PC-9 (cell line): ENCODE measurements at regions of chr7 and their contacts with region 1.

Region 1: DNA sequence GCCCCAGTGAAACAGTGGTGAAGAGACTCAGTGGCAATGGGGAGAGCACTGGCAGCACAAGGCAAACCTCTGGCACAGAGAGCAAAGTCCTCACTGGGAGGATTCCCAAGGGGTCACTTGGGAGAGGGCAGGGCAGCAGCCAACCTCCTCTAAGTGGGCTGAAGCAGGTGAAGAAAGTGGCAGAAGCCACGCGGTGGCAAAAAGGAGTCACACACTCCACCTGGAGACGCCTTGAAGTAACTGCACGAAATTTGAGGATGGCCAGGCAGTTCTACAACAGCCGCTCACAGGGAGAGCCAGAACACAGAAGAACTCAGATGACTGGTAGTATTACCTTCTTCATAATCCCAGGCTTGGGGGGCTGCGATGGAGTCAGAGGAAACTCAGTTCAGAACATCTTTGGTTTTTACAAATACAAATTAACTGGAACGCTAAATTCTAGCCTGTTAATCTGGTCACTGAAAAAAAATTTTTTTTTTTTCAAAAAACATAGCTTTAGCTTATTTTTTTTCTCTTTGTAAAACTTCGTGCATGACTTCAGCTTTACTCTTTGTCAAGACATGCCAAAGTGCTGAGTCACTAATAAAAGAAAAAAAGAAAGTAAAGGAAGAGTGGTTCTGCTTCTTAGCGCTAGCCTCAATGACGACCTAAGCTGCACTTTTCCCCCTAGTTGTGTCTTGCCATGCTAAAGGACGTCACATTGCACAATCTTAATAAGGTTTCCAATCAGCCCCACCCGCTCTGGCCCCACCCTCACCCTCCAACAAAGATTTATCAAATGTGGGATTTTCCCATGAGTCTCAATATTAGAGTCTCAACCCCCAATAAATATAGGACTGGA is 435 bp upstream of the IL6 start:
- DNase-seq: peak; percentile 81 to 86
- H3K4me3 ChIP-seq: peak overlapping the region; percentile 45; the same call in 1 of the 2 replicates
- H3K27ac ChIP-seq: peak overlapping the region; percentile 73
- H3K4me1 ChIP-seq: peaks cover 48% of the 10 kb centered on the region
- H3K27me3 ChIP-seq: no peaks in the 10 kb centered on the region
- CTCF ChIP-seq: peak; percentile 85

Region 2: DNA sequence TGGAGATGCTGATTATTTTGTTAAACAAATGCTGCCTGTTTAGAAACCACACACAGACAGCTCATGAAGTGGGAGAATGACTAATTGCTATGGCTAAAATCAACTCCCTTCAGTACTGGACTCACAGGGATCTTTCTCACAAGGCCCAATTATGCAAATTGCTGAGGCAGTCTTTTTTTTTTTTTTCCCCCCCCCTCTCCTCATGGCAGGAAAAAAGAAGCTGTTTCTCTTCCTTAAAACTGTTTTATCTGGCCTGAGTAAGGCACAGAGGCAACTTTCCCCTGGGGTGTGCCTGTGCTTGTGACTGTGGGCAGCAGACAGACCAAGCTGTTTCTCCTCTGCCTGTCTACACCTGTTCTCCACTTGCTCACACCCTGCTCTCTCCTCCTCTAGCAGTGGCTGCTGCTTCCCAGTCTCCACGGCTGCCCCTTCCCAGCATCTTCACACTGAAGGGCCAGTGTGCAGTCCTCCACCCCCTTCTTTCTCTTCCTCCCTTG is 161.2 kb before region 1 on chr7:
- CTCF ChIA-PET with region 1: interaction called, 113 read pairs
- POLR2A ChIA-PET with region 1: interaction called, 24 read pairs
- intact Hi-C with region 1: loop called (anchors 1 kb)
- DNase-seq: peak in 1 of 2 experiments; percentile 89
- H3K4me3 ChIP-seq: peak overlapping the region; percentile 54; the same call in 1 of the 2 replicates
- H3K27ac ChIP-seq: peak overlapping the region; percentile 84
- H3K4me1 ChIP-seq: peaks cover 70% of the 10 kb centered on the region
- H3K27me3 ChIP-seq: no peaks in the 10 kb centered on the region
- CTCF ChIP-seq: no peak

Region 3: DNA sequence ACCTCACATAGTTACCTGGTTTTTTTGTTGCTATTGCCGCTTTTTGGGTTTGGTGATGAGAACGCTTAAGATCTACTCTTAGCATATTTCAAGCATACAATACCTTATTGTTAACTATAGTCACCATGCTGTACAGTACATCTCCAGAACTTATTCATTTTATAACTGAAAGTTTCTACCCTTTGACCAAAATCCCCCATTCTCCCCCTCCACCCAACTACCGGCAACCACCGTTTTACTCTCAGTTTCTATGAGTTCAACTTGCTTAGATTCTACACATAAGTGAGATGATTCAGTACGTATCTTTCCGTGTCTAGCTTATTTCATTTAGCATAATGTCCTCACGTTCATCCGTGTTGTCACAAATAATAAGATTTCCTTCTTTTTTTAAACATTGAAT is 86.3 kb before region 1 on chr7:
- CTCF ChIA-PET with region 1: no interaction called
- POLR2A ChIA-PET with region 1: interaction called, 13 read pairs
- intact Hi-C with region 1: no loop called
- DNase-seq: no peak
- H3K4me3 ChIP-seq: no peak overlapping the region
- H3K27ac ChIP-seq: no peak overlapping the region
- H3K4me1 ChIP-seq: no peaks in the 10 kb centered on the region
- H3K27me3 ChIP-seq: no peaks in the 10 kb centered on the region
- CTCF ChIP-seq: no peak

Region 4: DNA sequence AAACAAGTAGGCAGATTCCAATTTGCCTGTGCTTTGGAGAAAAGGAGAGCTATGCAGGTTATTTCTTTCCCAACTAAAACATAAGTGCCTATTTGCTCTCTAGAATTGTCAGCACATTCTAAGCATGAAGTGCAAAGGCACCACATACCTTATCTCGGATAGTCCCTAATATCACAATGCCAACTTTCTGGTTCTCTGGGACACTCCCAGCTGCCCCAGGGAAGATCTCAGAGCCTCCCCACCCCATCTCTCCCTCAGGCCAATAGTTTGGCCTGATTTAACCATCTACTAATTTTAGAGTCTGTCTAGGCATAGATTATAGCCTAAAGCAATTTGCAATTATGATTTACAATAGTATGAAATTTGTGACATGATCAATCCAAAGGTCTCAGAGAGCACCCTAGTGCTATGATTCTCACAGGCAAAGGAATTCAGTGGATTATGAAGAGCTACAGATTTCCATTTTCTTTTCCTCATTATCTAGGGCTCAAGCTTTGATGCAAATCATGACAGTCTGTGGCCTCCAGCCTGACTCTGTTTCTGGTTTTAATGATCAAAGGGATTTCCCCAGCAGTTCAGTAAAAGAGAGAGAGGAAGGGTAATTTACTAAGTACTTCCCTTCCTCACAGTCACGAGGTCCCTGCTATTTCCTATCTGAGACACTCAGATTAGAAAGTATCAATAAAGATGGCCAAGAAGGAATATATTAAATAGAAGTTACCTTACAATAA is 28.5 kb before region 1 on chr7:
- CTCF ChIA-PET with region 1: interaction called, 21 read pairs
- POLR2A ChIA-PET with region 1: no interaction called
- intact Hi-C with region 1: no loop called
- DNase-seq: peak; percentile 35 to 60
- H3K4me3 ChIP-seq: no peak overlapping the region
- H3K27ac ChIP-seq: no peak overlapping the region
- H3K4me1 ChIP-seq: peaks cover 15% of the 10 kb centered on the region; the same call in 1 of the 2 replicates
- H3K27me3 ChIP-seq: no peaks in the 10 kb centered on the region
- CTCF ChIP-seq: no peak

Region 5: DNA sequence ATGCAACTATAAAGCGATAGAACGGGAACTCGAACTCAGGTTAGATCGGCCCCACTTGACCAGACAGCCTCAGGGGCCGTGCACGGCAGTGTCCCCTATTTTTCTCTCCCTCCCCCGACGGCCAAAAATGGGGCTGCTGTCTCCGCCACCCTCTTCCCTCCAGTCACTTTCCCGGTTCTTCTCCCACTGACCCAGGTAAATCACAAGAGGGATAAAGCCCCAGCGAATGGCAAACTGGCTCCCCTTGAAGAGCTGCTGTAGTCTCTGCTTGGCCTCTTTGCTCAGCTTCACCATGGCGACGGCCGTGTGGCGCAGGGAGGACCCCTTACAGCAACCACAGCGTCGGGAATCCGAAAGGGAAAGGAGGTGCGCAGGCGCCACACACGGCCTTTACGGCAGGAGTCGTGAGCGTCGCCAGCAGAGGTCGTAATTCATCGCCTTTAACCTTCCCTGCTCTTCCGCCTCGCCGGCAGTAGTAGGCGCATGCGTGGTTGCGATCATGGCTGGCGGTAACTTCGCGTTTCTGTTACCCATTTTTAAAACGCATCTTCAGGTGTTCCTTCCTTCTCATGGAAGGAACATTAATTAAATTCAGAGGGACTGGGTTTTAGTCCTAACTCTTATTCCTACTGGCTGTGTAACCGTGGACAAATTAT is 96.0 kb after region 1 on chr7 and contains the start of gene TOMM7:
- CTCF ChIA-PET with region 1: interaction called, 3 read pairs
- POLR2A ChIA-PET with region 1: no interaction called
- intact Hi-C with region 1: loop called (anchors 5 kb)
- DNase-seq: peak; percentile 90 to 94
- H3K4me3 ChIP-seq: peak within 1 kb of the TSS; percentile 99
- H3K27ac ChIP-seq: peak within 1 kb of the TSS; percentile 33
- H3K4me1 ChIP-seq: peaks cover 29% of the 10 kb centered on the region
- H3K27me3 ChIP-seq: no peaks in the 10 kb centered on the region
- CTCF ChIP-seq: peak; percentile 65
- total RNA-seq, gene TOMM7: 588 and 703 TPM in 2 replicates

Region 6: GRCh38 chr7:22865602-22865960 is 139.0 kb after region 1 on chr7:
- CTCF ChIA-PET with region 1: no interaction called
- POLR2A ChIA-PET with region 1: no interaction called
- intact Hi-C with region 1: no loop called
- DNase-seq: no peak
- H3K4me3 ChIP-seq: no peak overlapping the region
- H3K27ac ChIP-seq: no peak overlapping the region
- H3K4me1 ChIP-seq: no peaks in the 10 kb centered on the region
- H3K27me3 ChIP-seq: no peaks in the 10 kb centered on the region
- CTCF ChIP-seq: no peak

Region 7: GRCh38 chr7:23072048-23072447 is 345.5 kb after region 1 on chr7:
- CTCF ChIA-PET with region 1: no interaction called
- POLR2A ChIA-PET with region 1: interaction called, 3 read pairs
- intact Hi-C with region 1: loop called (anchors 5 kb)
- DNase-seq: no peak
- H3K4me3 ChIP-seq: no peak overlapping the region
- H3K27ac ChIP-seq: no peak overlapping the region
- H3K4me1 ChIP-seq: peaks cover 30% of the 10 kb centered on the region
- H3K27me3 ChIP-seq: no peaks in the 10 kb centered on the region
- CTCF ChIP-seq: no peak; the same call in 1 of the 2 replicates